Dorsolateral prefrontal cortex (tissue), 120 donors: ENCODE measurements at regions of chr2 and their contacts with region 1.

Region 1: GRCh38 chr2:17851731-17852585 is 26.5 kb upstream of the KCNS3 start:
- DNase-seq: peak; percentile 24 to 69 (median 60)
- H3K4me3 ChIP-seq: no peak overlapping the region
- H3K27ac ChIP-seq: no peak overlapping the region
- H3K27me3 ChIP-seq: peaks cover 0 to 6% (median 0%) of the 10 kb centered on the region in 45 donors
- CTCF ChIP-seq: peak; percentile 67 to 96 (median 88)

Region 2: GRCh38 chr2:18149645-18150246 is 297.8 kb after region 1 on chr2:
- intact Hi-C with region 1: loop called in 1 of 2 experiments (anchors 5 kb)
- DNase-seq: no peak
- H3K4me3 ChIP-seq: no peak overlapping the region
- H3K27ac ChIP-seq: no peak overlapping the region
- H3K27me3 ChIP-seq: peaks cover 0 to 12% (median 0%) of the 10 kb centered on the region in 45 donors
- CTCF ChIP-seq: peak; percentile 55 to 87 (median 74)

Region 3: DNA sequence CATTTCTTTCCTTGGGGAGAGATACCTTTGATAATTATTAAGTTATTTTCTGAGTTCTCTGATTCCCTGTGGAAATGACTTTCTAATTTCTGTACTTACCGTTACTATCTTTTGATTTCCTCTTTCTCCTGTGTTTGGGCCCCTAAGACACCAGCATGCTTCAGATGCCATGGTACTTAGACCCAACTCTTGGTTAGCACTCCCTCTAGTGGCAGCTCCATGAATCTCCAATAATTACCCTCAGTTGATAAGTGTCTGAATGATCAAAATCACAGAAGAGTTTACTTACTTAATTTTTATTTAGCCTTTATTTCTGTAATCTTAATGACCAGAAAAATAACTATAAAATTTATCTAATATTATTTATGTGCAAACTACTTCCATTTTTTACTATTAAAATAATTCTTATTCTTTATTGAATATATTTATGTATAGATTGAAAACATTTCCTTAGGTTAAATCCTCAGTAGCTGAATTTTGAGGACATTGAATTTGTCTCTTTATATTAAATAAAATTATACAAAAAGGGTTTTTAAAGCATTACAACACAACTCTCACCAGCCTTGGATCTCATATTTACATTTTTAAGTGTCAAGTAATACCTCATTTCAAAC is 326.9 kb after region 1 on chr2:
- intact Hi-C with region 1: loop called (anchors 1 to 5 kb)
- DNase-seq: peak in 1 of 10 donors; percentile 45
- H3K4me3 ChIP-seq: no peak overlapping the region
- H3K27ac ChIP-seq: no peak overlapping the region
- H3K27me3 ChIP-seq: peaks cover 0 to 14% (median 0%) of the 10 kb centered on the region in 45 donors
- CTCF ChIP-seq: peak; percentile 50 to 87 (median 78)

Region 4: GRCh38 chr2:18378020-18378653 is 526.2 kb after region 1 on chr2:
- intact Hi-C with region 1: loop called (anchors 2 to 5 kb)
- DNase-seq: peak in 3 of 10 donors; percentile 7 to 38 (median 30)
- H3K4me3 ChIP-seq: no peak overlapping the region
- H3K27ac ChIP-seq: no peak overlapping the region
- H3K27me3 ChIP-seq: peaks cover 0 to 18% (median 0%) of the 10 kb centered on the region in 45 donors
- CTCF ChIP-seq: peak in 55 of 56 donors; percentile 47 to 94 (median 82)